ENCODE measurements at regions of chr20 and their contacts with region 1.

Region 1: GRCh38 chr20:51966291-51966971 is 164.1 kb upstream of the SALL4 start:
- ATAC-seq: peak in 6 of 8 experiments; percentile 17 to 95 (median 32)
- H3K4me3 ChIP-seq: no peak overlapping the region
- H3K27ac ChIP-seq: no peak overlapping the region
- H3K4me1 ChIP-seq: peaks cover 8 to 10% of the 10 kb centered on the region in 2 donors

Region 2: DNA sequence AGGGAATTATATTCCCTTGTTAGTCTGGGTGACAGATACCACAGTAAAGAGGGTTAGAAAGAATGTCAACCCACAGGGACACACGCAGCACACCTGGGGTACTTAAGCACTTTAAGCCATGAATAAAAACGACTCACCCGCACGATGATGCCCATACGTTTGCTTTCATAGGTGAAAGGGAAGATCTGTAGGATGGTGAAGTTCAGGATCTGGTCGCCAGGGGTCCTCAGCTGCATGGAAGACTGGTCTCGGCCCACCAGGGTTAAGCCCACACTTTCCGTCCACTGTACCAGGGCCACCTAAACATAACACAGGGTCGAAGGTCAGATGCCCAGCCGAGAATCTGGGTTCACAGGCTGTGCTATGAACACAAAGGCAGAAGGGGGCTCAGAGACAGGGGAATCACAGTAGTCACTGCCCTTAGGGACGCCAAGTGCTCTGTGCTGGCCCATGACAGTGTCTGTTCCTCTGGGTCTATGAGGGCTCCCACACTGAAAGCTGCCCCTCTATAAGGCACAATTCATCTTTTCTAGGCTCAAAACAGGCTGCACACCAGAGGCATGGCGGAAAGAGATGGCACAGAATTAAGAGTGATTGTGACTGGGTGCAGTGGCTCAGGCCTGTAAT is 327.1 kb before region 1 on chr20:
- in situ Hi-C with region 1: loop called in 1 of 9 experiments (anchors 25 kb)
- ATAC-seq: peak; percentile 58 to 90 (median 70)
- H3K4me3 ChIP-seq: no peak overlapping the region
- H3K27ac ChIP-seq: no peak overlapping the region
- H3K4me1 ChIP-seq: no peaks in the 10 kb centered on the region

Region 3: DNA sequence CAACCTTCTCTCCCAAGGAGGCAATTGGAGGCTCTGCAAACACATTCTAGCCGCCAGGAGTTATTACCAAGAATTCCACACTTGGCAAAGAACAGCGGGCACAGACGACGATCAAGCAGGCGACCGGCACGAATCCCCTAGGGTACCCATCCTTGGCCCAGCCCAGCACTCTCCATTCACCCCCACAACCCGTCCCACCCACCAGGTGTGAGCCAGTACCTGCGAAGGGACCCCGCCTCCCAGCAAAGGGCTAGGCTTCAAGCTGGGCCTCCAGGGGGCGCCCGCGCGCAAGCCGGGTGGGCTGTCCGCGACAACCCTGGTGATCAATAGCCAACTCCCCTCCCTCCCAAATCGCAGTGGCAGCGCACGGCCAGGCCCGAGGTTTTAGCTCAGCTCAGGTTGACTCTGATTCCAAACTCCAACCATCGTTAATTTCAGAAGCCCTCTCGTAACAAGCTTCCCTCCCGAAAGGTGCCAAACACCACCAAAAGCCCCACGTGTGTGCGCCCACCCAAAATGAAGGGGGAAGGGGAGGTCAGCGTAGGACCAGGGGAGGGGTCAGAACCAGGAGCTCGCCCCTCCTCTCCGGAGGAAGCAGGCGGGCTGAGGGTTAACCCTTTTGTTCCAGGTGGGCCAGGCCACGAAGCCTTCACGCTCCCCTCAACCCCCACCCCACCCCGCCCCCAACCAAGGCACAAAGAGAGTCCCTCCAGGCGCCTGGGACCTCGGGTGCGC is 166.2 kb before region 1 on chr20:
- in situ Hi-C with region 1: loop called in 1 of 9 experiments (anchors 10 kb)
- ATAC-seq: peak; percentile 76 to 92 (median 87)
- H3K4me3 ChIP-seq: peak overlapping the region; percentile 43 to 89 (median 49)
- H3K27ac ChIP-seq: peak overlapping the region; percentile 73 to 84
- H3K4me1 ChIP-seq: peaks cover 21 to 25% of the 10 kb centered on the region in 2 donors

Region 4: DNA sequence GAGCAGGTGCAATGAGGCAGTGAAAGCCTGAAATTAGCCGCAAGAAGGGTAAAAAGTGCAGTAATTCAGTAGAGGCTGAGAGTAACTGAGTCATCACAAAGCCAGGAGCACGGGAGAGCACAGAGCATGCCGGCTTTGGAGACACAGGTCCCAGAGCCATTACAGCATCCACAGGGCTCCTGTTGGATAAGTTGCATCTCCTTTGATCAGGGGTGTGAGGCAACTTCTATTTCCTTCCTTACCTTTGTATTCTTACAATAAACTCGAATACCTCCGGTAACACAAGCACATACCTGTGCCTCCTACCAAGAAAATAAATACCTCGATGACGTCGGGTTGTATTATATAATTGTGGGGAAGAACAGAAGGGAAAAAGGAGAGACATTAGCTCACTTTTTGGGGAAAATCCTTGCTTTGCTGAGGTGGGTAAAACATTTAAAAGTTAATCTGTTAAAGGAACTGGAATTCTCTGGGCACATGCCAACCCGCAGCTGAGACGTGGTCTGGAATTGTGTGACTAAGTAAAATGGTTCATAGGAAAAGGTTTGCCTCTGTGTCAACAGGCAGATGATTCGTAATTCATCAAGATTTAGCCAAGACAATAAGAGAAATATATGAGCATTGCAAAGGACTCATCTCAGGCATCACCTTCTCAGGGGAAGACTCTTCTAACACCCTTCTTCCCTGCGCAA is 585.9 kb after region 1 on chr20:
- in situ Hi-C with region 1: no loop called
- ATAC-seq: no peak
- H3K4me3 ChIP-seq: no peak overlapping the region
- H3K27ac ChIP-seq: no peak overlapping the region
- H3K4me1 ChIP-seq: no peaks in the 10 kb centered on the region

Measured in motor neuron (in vitro differentiated cells).